ENCODE measurements at regions of chr5 and their contacts with region 1.

Region 1: GRCh38 chr5:14644623-14645237 is 19.8 kb upstream of the OTULIN start:
- DNase-seq: no peak
- H3K4me3 ChIP-seq: no peak overlapping the region
- H3K27ac ChIP-seq: no peak overlapping the region
- H3K4me1 ChIP-seq: peaks cover 3% of the 10 kb centered on the region
- H3K27me3 ChIP-seq: peaks cover 37% of the 10 kb centered on the region
- CTCF ChIP-seq: no peak

Region 2: DNA sequence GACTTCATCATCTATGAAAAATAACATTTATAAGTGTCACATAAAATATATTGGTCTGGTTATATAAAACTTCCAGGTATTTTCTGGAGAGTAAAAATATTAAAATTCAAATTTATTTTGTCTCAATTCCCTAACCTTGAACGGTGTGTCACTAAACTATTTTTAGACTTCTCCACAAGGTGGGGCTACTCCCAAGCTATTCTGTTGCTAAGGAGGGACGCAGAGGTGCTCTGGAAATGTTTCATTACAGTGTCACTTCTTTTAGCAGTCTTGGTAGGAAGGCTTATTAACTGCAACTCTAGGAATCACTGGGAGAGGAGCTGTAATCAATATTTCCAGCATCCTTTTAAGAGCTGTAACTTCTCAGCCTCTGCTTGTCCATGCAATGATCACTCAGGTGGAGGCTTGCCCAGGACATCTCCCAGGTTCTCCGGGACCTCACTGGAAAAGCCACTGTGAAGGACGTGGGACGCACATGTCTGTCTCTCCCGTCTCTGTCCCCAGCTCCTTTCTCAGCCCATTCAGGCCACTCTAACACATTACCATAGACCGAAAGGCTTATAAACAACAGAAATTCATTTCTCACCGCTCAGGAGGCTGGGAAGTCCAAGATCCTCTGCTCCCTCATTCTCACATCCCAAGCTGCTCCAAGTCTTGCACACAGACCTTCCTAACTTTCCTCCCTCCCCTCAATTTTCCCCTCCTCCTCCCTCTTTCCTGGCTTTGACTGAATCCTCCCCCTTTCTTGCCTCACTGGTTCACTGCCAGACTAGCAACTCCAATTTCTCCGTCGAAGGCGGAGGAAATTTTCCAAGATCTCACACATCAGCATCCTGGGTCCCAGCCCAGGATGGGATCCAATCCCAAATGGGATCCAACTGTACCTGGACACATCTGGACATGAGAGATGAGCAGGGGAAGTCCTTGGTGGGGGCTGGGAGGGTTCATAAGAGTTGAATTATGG is 667.6 kb before region 1 on chr5:
- CTCF ChIA-PET with region 1: interaction called, 4 read pairs
- POLR2A ChIA-PET with region 1: no interaction called
- intact Hi-C with region 1: loop called (anchors 1 kb)
- DNase-seq: peak; percentile 60
- H3K4me3 ChIP-seq: no peak overlapping the region
- H3K27ac ChIP-seq: no peak overlapping the region
- H3K4me1 ChIP-seq: no peaks in the 10 kb centered on the region
- H3K27me3 ChIP-seq: peaks cover 10% of the 10 kb centered on the region
- CTCF ChIP-seq: peak; percentile 64

Region 3: GRCh38 chr5:14270209-14270702 is 374.5 kb before region 1 on chr5:
- CTCF ChIA-PET with region 1: no interaction called
- POLR2A ChIA-PET with region 1: no interaction called
- intact Hi-C with region 1: loop called (anchors 10 kb)
- DNase-seq: peak; percentile 82
- H3K4me3 ChIP-seq: no peak overlapping the region
- H3K27ac ChIP-seq: no peak overlapping the region
- H3K4me1 ChIP-seq: peaks cover 74% of the 10 kb centered on the region
- H3K27me3 ChIP-seq: no peaks in the 10 kb centered on the region
- CTCF ChIP-seq: peak; percentile 86

Region 4: GRCh38 chr5:14351845-14352712 is 292.7 kb before region 1 on chr5:
- CTCF ChIA-PET with region 1: interaction called, 16 read pairs
- POLR2A ChIA-PET with region 1: no interaction called
- intact Hi-C with region 1: no loop called
- DNase-seq: peak; percentile 70
- H3K4me3 ChIP-seq: no peak overlapping the region
- H3K27ac ChIP-seq: no peak overlapping the region
- H3K4me1 ChIP-seq: no peaks in the 10 kb centered on the region
- H3K27me3 ChIP-seq: no peaks in the 10 kb centered on the region
- CTCF ChIP-seq: peak; percentile 95

Region 5: GRCh38 chr5:14364576-14365472 is 279.9 kb before region 1 on chr5:
- CTCF ChIA-PET with region 1: interaction called, 13 read pairs
- POLR2A ChIA-PET with region 1: no interaction called
- intact Hi-C with region 1: loop called (anchors 1 kb)
- DNase-seq: no peak
- H3K4me3 ChIP-seq: no peak overlapping the region
- H3K27ac ChIP-seq: no peak overlapping the region
- H3K4me1 ChIP-seq: peaks cover 4% of the 10 kb centered on the region
- H3K27me3 ChIP-seq: no peaks in the 10 kb centered on the region
- CTCF ChIP-seq: peak; percentile 53

Region 6: GRCh38 chr5:14399054-14399692 is 245.6 kb before region 1 on chr5:
- CTCF ChIA-PET with region 1: interaction called, 13 read pairs
- POLR2A ChIA-PET with region 1: no interaction called
- intact Hi-C with region 1: loop called (anchors 1 kb)
- DNase-seq: peak; percentile 81
- H3K4me3 ChIP-seq: no peak overlapping the region
- H3K27ac ChIP-seq: no peak overlapping the region
- H3K4me1 ChIP-seq: peaks cover 42% of the 10 kb centered on the region
- H3K27me3 ChIP-seq: no peaks in the 10 kb centered on the region
- CTCF ChIP-seq: peak; percentile 79

Region 7: GRCh38 chr5:14424011-14424685 is 220.6 kb before region 1 on chr5:
- CTCF ChIA-PET with region 1: interaction called, 10 read pairs
- POLR2A ChIA-PET with region 1: no interaction called
- intact Hi-C with region 1: no loop called
- DNase-seq: no peak
- H3K4me3 ChIP-seq: no peak overlapping the region
- H3K27ac ChIP-seq: no peak overlapping the region
- H3K4me1 ChIP-seq: peaks cover 5% of the 10 kb centered on the region
- H3K27me3 ChIP-seq: no peaks in the 10 kb centered on the region
- CTCF ChIP-seq: no peak

Region 8: DNA sequence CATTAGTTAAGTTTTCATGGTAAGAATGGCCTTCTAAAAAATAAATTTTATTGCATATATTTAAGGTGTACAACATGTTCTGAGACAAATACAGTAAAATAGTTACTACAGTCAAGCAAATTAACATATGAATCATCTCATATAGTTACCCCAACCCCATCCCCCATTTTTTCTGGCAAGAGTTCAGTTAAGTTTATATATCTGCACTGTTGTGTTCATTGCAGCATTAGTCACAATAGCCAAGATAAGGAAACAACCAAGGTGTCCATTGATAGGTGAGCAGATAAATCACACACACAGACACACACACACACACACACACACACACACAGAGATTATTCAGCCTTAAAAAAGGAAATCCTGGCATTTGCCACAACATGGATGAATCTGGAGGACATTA is 17.5 kb before region 1 on chr5:
- CTCF ChIA-PET with region 1: no interaction called
- POLR2A ChIA-PET with region 1: no interaction called
- intact Hi-C with region 1: no loop called
- DNase-seq: no peak
- H3K4me3 ChIP-seq: no peak overlapping the region
- H3K27ac ChIP-seq: no peak overlapping the region
- H3K4me1 ChIP-seq: no peaks in the 10 kb centered on the region
- H3K27me3 ChIP-seq: peaks cover 2% of the 10 kb centered on the region
- CTCF ChIP-seq: no peak

Region 9: GRCh38 chr5:15363601-15364000 is 718.9 kb after region 1 on chr5:
- CTCF ChIA-PET with region 1: no interaction called
- POLR2A ChIA-PET with region 1: no interaction called
- intact Hi-C with region 1: no loop called
- DNase-seq: no peak
- H3K4me3 ChIP-seq: no peak overlapping the region
- H3K27ac ChIP-seq: no peak overlapping the region
- H3K4me1 ChIP-seq: peaks cover 3% of the 10 kb centered on the region
- H3K27me3 ChIP-seq: no peaks in the 10 kb centered on the region
- CTCF ChIP-seq: no peak

Measured in A673 (cell line).